PC-9 (cell line): ENCODE measurements at regions of chr5 and their contacts with region 1.

Region 1: GRCh38 chr5:173615884-173616576 is 420 bp downstream of the BOD1 start:
- DNase-seq: peak; percentile 67 to 72
- H3K4me3 ChIP-seq: peak overlapping the region; percentile 98
- H3K27ac ChIP-seq: peak overlapping the region; percentile 84
- H3K4me1 ChIP-seq: peaks cover 31% of the 10 kb centered on the region
- H3K27me3 ChIP-seq: no peaks in the 10 kb centered on the region
- CTCF ChIP-seq: peak; percentile 70

Region 2: DNA sequence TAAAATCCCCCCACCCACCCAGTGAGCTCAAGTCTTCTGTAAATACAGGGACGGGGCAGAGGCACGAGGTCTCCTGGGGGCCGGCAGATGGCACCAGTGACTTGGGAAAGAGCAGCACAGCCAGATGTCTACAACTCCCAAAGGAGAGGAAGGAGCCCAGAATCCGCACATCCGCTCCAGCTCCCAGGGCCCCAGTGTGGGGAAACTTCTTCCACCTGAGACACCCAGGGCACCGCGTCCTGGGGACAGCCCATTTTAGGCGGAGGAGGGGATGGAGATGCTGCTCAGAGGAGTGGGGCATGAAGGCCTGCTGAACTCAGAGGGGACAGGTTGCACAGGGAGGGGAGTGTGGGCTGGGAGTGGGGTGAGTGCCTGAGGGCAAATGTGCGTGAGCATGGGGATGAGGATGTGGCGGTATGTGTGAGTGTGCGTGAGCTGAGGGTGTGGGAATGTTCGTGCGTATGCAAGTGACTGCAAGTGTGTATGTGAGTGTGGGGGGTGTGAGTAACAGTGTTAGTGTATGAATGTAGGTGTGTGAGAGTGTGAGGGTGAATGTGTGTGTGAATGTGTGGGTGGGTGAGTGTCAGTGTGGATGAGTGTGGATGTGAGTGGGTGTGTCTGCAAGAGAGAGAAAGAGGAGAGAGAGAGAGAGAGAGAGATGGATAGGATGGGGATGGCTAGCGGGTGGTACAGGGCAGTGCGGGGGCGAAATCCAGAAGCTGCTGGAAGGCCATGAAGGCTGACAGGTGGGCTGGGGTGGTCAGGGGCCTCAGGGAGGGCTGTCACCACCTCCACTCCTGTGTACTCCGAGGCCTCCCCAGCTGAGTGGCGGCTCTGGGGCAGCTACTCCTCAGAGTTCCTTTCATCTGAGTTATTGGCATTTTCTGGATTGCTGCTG is 908.5 kb before region 1 on chr5:
- CTCF ChIA-PET with region 1: interaction called, 3 read pairs
- POLR2A ChIA-PET with region 1: no interaction called
- intact Hi-C with region 1: loop called (anchors 1 kb)
- DNase-seq: peak in 1 of 2 experiments; percentile 69
- H3K4me3 ChIP-seq: no peak overlapping the region
- H3K27ac ChIP-seq: no peak overlapping the region
- H3K4me1 ChIP-seq: no peaks in the 10 kb centered on the region; the same call in 1 of the 2 replicates
- H3K27me3 ChIP-seq: no peaks in the 10 kb centered on the region
- CTCF ChIP-seq: peak; percentile 74

Region 3: DNA sequence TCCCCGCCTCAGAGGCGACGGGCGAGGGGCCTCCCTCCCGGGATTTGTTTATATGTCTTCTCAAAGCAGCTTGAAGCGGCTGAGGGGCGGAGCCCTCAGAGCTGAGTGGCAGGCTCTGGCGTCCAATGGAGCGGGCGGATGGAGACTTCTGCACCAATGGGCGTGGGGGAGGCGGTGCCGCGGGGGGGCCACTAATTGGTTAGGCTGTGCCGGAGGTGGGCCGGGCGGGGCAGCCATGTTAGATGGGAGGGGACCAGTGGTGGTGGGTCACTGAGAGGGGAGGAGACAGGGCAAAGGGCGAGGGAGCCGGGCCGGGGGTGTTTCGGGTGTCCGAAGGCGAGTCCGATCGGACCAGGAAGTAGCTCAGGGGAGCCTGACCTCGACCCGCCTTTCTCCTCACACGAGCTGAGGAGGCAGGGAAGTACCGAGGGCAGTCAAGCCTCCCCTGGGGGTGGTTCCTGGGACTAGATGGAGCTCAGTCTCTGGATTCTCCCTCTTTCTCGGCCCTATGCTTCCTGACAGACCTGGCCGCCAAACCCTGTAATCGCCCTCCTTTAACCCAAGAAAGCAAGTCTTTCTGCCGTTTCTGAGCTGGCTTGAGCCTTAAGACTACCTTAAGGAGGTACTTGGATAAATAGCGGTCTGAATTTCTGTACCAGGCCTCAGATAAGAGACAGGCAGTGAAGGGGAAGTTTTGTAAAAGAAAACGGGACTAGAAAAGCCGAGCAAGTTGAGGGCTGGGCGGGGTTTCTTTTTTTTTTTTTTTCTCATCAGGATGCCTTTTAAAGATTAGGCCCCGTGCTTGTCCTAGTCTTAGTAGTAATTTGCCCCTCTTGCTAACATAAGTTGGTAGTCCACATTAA is 558.7 kb before region 1 on chr5:
- CTCF ChIA-PET with region 1: no interaction called
- POLR2A ChIA-PET with region 1: no interaction called
- intact Hi-C with region 1: loop called (anchors 1 kb)
- DNase-seq: peak; percentile 94 to 100
- H3K4me3 ChIP-seq: peak overlapping the region; percentile 61
- H3K27ac ChIP-seq: peak overlapping the region; percentile 80
- H3K4me1 ChIP-seq: peaks cover 15% of the 10 kb centered on the region; the same call in 1 of the 2 replicates
- H3K27me3 ChIP-seq: no peaks in the 10 kb centered on the region
- CTCF ChIP-seq: no peak

Region 4: GRCh38 chr5:173764321-173765029 is 148.4 kb after region 1 on chr5:
- CTCF ChIA-PET with region 1: no interaction called
- POLR2A ChIA-PET with region 1: interaction called, 8 read pairs
- intact Hi-C with region 1: loop called (anchors 2 kb)
- DNase-seq: peak; percentile 89 to 95
- H3K4me3 ChIP-seq: no peak overlapping the region
- H3K27ac ChIP-seq: peak overlapping the region; percentile 91
- H3K4me1 ChIP-seq: peaks cover 46% of the 10 kb centered on the region
- H3K27me3 ChIP-seq: no peaks in the 10 kb centered on the region
- CTCF ChIP-seq: no peak

Region 5: DNA sequence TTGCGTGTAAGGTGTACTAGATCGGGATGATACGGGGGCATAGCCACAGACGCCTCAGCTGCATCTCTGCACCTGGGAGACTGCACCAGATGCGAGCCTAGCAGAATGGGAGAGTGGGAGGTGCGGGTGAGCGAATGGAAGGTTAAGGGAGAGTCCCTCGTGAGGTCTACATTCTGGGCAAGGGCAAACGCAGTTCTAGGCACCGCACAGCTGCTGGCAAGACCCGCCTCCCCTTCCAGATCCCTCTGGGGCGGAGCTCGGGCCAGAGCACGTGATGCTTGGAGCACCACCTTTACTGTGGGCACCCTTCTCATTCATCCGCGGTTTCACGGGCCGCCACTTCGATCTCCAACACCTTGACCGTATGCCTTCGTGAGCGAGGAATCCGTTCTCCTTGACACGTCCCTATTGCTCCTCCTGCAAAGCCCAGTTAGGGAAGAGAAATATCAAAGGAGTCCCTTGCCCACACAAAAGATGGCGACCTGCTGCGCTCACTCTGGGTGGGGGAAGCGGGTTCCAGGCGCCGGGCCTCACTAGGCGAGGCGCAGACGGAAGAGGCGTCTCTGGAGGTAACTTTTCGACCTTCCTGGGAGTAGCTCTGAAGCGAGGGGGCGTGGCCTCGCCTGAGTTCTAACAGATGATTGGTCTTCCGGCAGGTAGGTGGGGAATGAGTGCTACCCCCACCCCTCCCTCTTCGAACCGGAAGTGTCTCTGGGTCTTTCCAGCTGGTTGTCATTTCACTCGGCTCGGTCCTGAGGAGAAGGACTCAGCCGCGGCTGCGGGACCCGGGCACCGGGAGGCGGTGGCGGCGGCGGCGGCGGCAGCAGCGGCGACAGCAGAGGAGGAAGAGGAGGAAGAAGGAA is 271.8 kb after region 1 on chr5 and contains the start of gene CPEB4:
- CTCF ChIA-PET with region 1: no interaction called
- POLR2A ChIA-PET with region 1: no interaction called
- intact Hi-C with region 1: loop called (anchors 2 kb)
- DNase-seq: peak; percentile 96 to 98
- H3K4me3 ChIP-seq: peak within 1 kb of the TSS; percentile 86
- H3K27ac ChIP-seq: peak within 1 kb of the TSS; percentile 84
- H3K4me1 ChIP-seq: peaks cover 66% of the 10 kb centered on the region
- H3K27me3 ChIP-seq: no peaks in the 10 kb centered on the region
- CTCF ChIP-seq: no peak
- total RNA-seq, gene CPEB4: 11.6 and 15.4 TPM in 2 replicates

Region 6: GRCh38 chr5:173972925-173973615 is 357.0 kb after region 1 on chr5:
- CTCF ChIA-PET with region 1: interaction called, 5 read pairs
- POLR2A ChIA-PET with region 1: no interaction called
- intact Hi-C with region 1: loop called (anchors 1 kb)
- DNase-seq: peak; percentile 54 to 81
- H3K4me3 ChIP-seq: no peak overlapping the region; the same call in 1 of the 2 replicates
- H3K27ac ChIP-seq: no peak overlapping the region
- H3K4me1 ChIP-seq: peaks cover 37% of the 10 kb centered on the region
- H3K27me3 ChIP-seq: no peaks in the 10 kb centered on the region
- CTCF ChIP-seq: peak; percentile 90